MCF 10A (cell line): ENCODE measurements at regions of chr3 and their contacts with region 1.

Region 1: DNA sequence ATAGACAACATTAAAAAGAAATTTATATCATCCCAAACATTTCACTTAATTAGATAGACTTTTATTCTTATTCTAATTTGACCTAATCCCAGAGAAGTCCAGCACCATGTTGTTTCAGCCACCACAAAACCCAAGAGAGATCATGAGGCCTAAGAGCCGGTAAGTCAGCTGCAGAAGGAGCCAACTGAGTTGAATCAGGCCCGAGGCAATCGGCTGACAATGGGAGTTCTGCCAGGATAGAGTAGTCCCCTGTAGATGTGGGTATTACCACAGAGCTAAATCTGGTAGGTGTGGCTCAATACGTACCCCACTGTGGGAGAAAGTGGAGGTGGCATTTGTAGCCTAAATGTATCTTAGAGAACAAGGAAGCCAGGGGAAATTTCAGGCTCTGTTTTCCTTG is 49.7 kb upstream of the UMPS start:
- DNase-seq: no peak
- H3K4me3 Mint-ChIP-seq: no peak overlapping the region
- H3K27ac Mint-ChIP-seq: no peak overlapping the region
- H3K4me1 Mint-ChIP-seq: peaks cover 2% of the 10 kb centered on the region
- H3K27me3 Mint-ChIP-seq: no peaks in the 10 kb centered on the region
- CTCF ChIP-seq: no peak

Region 2: GRCh38 chr3:124650798-124651197 is 29.7 kb before region 1 on chr3:
- CTCF ChIA-PET with region 1: no interaction called
- POLR2A ChIA-PET with region 1: no interaction called
- intact Hi-C with region 1: loop called (anchors 1 kb)
- DNase-seq: no peak
- H3K4me3 Mint-ChIP-seq: no peak overlapping the region
- H3K27ac Mint-ChIP-seq: no peak overlapping the region
- H3K4me1 Mint-ChIP-seq: no peaks in the 10 kb centered on the region
- H3K27me3 Mint-ChIP-seq: peaks cover 68% of the 10 kb centered on the region
- CTCF ChIP-seq: no peak

Region 3: DNA sequence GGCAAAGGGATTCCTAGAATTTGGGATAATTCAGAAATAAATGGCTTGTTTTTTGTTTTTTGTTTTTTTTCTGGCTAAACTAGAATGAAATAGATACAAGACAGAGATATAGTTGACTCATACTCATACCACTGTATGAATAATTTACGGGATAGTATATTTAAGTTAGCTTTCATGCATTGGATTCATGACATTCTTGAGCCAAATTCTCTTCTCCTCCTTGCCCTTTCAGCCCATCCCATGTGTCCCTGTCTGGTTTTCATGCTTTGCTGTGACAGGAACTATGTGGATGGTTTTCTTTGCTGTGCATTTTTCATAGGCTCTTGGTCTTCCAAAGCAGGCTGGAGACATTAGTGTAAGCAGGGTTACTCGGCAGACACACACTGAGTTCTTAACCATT is 16.8 kb before region 1 on chr3:
- CTCF ChIA-PET with region 1: no interaction called
- POLR2A ChIA-PET with region 1: no interaction called
- intact Hi-C with region 1: no loop called
- DNase-seq: no peak
- H3K4me3 Mint-ChIP-seq: no peak overlapping the region
- H3K27ac Mint-ChIP-seq: no peak overlapping the region
- H3K4me1 Mint-ChIP-seq: peaks cover 7% of the 10 kb centered on the region
- H3K27me3 Mint-ChIP-seq: peaks cover 28% of the 10 kb centered on the region
- CTCF ChIP-seq: no peak

Region 4: GRCh38 chr3:124768812-124769211 is 88.3 kb after region 1 on chr3:
- CTCF ChIA-PET with region 1: no interaction called
- POLR2A ChIA-PET with region 1: no interaction called
- intact Hi-C with region 1: no loop called
- DNase-seq: peak; percentile 56
- H3K4me3 Mint-ChIP-seq: no peak overlapping the region
- H3K27ac Mint-ChIP-seq: no peak overlapping the region
- H3K4me1 Mint-ChIP-seq: no peaks in the 10 kb centered on the region
- H3K27me3 Mint-ChIP-seq: no peaks in the 10 kb centered on the region
- CTCF ChIP-seq: peak; percentile 43

Region 5: GRCh38 chr3:124800511-124801258 is 120.2 kb after region 1 on chr3:
- CTCF ChIA-PET with region 1: no interaction called
- POLR2A ChIA-PET with region 1: no interaction called
- intact Hi-C with region 1: no loop called
- DNase-seq: no peak
- H3K4me3 Mint-ChIP-seq: no peak overlapping the region
- H3K27ac Mint-ChIP-seq: no peak overlapping the region
- H3K4me1 Mint-ChIP-seq: no peaks in the 10 kb centered on the region
- H3K27me3 Mint-ChIP-seq: no peaks in the 10 kb centered on the region
- CTCF ChIP-seq: no peak